ENCODE measurements at regions of chr9 and their contacts with region 1.

Region 1: GRCh38 chr9:3299872-3300271 is 225.9 kb downstream of the RFX3 start:
- DNase-seq: no peak
- H3K4me3 ChIP-seq: no peak overlapping the region
- H3K27ac ChIP-seq: no peak overlapping the region
- H3K4me1 ChIP-seq: no peaks in the 10 kb centered on the region
- H3K27me3 ChIP-seq: no peaks in the 10 kb centered on the region
- CTCF ChIP-seq: no peak

Region 2: DNA sequence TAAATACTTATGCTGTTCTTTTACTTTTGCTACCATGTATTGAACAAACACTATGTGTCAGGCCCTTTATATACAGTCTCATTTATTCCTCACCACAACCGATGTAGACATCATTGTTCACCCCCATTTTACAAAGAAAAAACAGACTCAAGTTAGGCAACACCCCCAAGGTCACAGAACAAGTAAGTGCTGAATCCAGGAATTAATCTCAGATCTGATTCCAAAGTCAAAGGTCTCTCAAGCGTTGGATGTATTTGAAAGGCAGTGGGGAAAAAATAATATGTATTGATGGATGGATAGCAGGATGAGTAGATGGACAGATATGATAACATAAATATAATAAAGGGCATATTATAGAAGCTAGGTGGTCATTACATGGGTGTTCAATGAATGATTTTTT is 763.4 kb before region 1 on chr9:
- intact Hi-C with region 1: no loop called
- DNase-seq: no peak
- H3K4me3 ChIP-seq: no peak overlapping the region
- H3K27ac ChIP-seq: no peak overlapping the region
- H3K4me1 ChIP-seq: no peaks in the 10 kb centered on the region
- H3K27me3 ChIP-seq: no peaks in the 10 kb centered on the region
- CTCF ChIP-seq: no peak

Region 3: DNA sequence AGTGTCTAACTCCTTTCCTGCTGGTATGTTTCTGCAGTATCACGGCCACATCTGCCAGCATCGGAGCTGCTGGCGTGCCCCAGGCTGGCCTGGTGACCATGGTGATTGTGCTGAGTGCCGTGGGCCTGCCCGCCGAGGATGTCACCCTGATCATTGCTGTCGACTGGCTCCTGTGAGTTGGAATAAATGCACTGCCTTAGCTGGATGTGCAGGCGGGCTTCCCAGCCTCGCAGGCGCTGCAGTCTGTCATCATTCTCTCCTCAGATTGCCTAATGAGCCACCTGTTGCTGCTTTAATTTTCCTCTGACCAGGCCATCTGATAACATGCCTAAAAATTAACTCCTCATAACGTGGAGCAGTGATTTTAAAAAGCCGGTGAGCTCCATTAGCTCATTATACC is 1283.1 kb after region 1 on chr9:
- intact Hi-C with region 1: loop called (anchors 5 kb)
- DNase-seq: no peak
- H3K4me3 ChIP-seq: no peak overlapping the region
- H3K27ac ChIP-seq: no peak overlapping the region
- H3K4me1 ChIP-seq: peaks cover 0 to 17% (median 7%) of the 10 kb centered on the region in 4 donors
- H3K27me3 ChIP-seq: no peaks in the 10 kb centered on the region
- CTCF ChIP-seq: no peak

Measured in tibial artery (tissue), 4 donors.